Thyroid gland (tissue), 4 donors: ENCODE measurements at regions of chr17 and their contacts with region 1.

Region 1: DNA sequence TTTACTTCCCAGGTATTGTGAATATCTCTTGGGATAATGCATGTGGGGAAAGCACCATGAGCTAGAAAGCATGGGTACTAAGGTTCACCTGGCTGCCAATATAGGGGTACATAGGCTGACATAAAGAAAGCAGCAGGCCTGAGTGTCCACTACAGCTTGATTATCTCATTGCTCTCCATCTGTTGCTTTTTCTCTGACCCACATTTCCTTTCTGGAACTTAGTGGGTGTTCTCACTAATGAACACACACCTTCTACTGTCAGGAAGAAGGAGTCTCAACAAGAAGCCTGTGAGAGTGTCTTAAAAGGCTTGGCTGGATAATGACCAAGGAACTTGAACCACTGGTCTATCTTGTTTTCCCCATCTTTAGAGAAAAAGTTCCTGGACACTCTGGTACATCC is 62.5 kb downstream of the CA10 start:
- DNase-seq: no peak
- H3K4me3 ChIP-seq: no peak overlapping the region
- H3K27ac ChIP-seq: no peak overlapping the region
- H3K4me1 ChIP-seq: no peaks in the 10 kb centered on the region
- H3K27me3 ChIP-seq: no peaks in the 10 kb centered on the region
- CTCF ChIP-seq: no peak
- POLR2A ChIP-seq: no peak

Region 2: GRCh38 chr17:51238255-51238887 is 857.7 kb before region 1 on chr17:
- intact Hi-C with region 1: no loop called
- DNase-seq: no peak
- H3K4me3 ChIP-seq: no peak overlapping the region
- H3K27ac ChIP-seq: no peak overlapping the region
- H3K4me1 ChIP-seq: peaks cover 0 to 4% of the 10 kb centered on the region in 2 donors
- H3K27me3 ChIP-seq: no peaks in the 10 kb centered on the region
- CTCF ChIP-seq: no peak
- POLR2A ChIP-seq: no peak

Region 3: GRCh38 chr17:51764387-51764972 is 331.6 kb before region 1 on chr17:
- intact Hi-C with region 1: loop called (anchors 5 kb)
- DNase-seq: peak; percentile 37 to 51
- H3K4me3 ChIP-seq: no peak overlapping the region
- H3K27ac ChIP-seq: no peak overlapping the region
- H3K4me1 ChIP-seq: no peaks in the 10 kb centered on the region
- H3K27me3 ChIP-seq: no peaks in the 10 kb centered on the region
- CTCF ChIP-seq: peak; percentile 55 to 93 (median 79)
- POLR2A ChIP-seq: no peak